Prostate gland (tissue), 2 donors: ENCODE measurements at regions of chr4 and their contacts with region 1.

Region 1: DNA sequence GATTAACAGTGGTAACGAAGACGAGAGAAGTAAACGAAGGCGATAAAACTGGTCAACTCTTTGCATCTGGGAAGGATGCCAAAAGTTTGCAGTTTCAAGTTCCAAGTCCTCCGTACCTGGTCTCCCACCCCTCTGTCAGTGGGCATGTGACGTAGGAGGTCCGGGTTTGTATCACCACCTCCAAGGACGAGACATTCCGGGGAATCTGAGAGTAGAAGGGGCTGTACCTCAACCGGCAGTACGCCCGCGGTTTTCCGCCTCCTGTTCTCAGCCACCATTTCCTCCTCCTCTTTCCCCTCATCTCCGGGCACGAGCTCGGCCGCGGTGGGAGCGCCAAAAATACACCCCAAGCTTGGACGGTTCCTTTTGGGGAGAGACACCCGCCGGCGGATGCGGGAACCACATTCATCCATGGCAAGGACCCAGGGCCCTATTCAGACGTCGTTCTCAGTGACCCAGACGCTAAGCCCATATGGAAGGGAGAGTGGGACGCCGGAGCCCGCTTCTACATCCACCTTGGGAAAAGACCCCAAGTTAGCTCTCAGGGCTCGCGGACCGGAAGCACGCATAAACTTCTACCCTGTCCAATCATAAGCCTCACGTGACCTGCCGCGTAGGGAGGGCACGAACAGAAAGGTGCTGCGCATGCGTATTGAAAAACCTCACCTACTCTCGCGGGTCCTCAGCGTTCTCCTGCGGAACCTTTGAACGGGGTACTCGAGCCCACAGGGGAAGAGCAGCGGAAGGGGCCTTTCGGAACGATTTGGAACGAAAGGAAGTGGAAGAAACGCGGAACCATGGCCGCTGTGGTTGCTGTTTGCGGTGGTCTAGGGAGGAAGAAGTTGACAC is at the starts of genes HELQ and MRPS18C:
- DNase-seq: peak; percentile 97
- H3K4me3 ChIP-seq: peak within 1 kb of the TSS; percentile 72 to 86
- H3K27ac ChIP-seq: peak within 1 kb of the TSS; percentile 96 to 98
- H3K4me1 ChIP-seq: no peaks in the 10 kb centered on the region
- H3K27me3 ChIP-seq: no peaks in the 10 kb centered on the region
- CTCF ChIP-seq: peak in 2 of 4 experiments; percentile 37 to 42
- POLR2A ChIP-seq: peak; percentile 77
- total RNA-seq, gene HELQ: 15.5 to 20.9 TPM
- total RNA-seq, gene MRPS18C: 12.2 to 30.8 TPM

Region 2: DNA sequence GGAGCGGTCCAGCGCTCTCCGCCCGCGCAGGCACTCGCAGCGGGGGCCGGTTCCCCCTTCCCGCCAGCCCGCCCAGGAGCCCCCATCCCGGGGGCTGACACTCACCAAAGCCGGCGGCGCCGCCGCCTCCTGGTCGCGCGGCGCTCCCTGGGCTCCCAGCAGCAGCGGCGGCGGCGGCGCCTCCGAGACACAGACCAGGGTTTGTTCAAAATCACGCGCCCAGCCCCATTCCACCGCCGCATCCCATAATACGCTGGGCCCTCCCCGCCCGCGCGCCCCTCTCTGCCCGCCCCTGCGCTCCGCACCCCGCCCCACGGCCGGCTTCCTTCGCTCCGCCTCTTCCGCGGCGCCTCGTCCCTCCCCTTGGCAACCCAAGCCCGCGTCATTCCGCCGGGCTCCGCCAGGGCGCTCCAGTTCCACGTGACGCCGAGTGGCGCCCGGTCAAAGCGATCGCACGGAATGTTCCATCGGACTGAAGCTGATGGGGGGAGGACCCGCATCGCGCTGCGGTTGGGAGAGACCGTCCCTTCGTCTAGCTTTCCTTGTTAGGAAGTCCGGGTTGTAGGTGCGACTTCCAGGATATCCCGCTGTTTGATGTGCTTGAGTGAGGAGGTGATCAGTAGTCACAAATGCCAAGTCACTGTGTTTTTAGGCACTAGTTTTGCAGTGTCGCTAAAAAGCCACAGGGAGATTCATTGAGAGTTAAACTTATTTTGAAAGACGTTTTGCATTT is 442.7 kb before region 1 on chr4:
- intact Hi-C with region 1: loop called (anchors 5 kb)
- DNase-seq: peak; percentile 95
- H3K4me3 ChIP-seq: peak overlapping the region; percentile 61 to 82
- H3K27ac ChIP-seq: peak overlapping the region; percentile 88 to 90
- H3K4me1 ChIP-seq: no peaks in the 10 kb centered on the region
- H3K27me3 ChIP-seq: no peaks in the 10 kb centered on the region
- CTCF ChIP-seq: peak; percentile 35 to 93 (median 70)
- POLR2A ChIP-seq: peak; percentile 72

Region 3: DNA sequence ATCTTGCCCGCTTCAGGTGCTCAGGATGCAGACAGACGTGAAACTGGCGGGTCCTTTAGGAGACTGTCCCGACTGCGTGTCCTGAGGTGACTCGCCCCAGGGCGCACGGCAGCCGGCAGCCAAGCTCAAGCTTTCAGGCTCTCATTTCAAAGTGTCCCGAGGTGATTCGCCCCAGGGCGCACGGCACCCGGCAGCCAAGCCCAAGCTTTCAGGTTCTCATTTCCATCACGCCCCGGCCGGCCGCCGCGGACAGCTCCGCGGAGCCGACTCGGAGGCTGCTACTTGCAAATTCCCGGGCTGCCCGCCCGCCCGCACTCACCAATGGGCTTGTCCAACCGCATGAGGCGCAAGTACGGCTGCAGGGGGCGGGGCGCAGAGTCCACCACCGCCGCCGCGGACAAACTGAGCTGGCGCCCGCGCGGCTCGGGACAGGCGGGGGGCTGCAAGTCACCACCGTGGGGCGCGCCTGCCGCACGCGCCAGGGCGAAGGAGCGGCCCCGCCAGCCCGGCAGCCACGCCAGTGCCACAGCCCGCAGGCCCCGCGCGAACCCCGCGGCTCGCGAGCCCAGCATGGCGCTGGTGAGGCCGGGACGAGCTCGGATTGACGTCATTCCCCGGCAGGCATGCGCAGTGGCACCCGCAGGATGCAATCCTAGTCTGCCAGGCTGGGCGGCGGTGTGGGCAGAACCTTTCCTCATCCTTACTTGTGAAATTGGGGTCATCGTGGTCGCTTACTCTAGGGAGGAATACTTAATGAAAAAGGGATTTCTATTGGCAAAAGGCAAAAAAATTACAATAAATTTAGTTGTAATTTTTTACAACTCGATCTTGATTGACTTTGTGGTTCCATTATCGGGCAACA is 171.1 kb before region 1 on chr4 and contains the start of gene COQ2:
- intact Hi-C with region 1: loop called (anchors 2 kb)
- DNase-seq: peak; percentile 93
- H3K4me3 ChIP-seq: peak within 1 kb of the TSS; percentile 66 to 71
- H3K27ac ChIP-seq: peak within 1 kb of the TSS; percentile 93 to 95
- H3K4me1 ChIP-seq: peaks cover 4% of the 10 kb centered on the region
- H3K27me3 ChIP-seq: no peaks in the 10 kb centered on the region
- CTCF ChIP-seq: peak in 3 of 4 experiments; percentile 40 to 65 (median 54)
- POLR2A ChIP-seq: peak; percentile 61
- total RNA-seq, gene COQ2: 12.8 to 13.1 TPM

Region 4: GRCh38 chr4:83548151-83548905 is 92.8 kb after region 1 on chr4:
- intact Hi-C with region 1: no loop called
- DNase-seq: peak; percentile 73
- H3K4me3 ChIP-seq: no peak overlapping the region
- H3K27ac ChIP-seq: no peak overlapping the region
- H3K4me1 ChIP-seq: no peaks in the 10 kb centered on the region
- H3K27me3 ChIP-seq: no peaks in the 10 kb centered on the region
- CTCF ChIP-seq: no peak
- POLR2A ChIP-seq: no peak